ENCODE measurements at regions of chr6 and their contacts with region 1.

Region 1: GRCh38 chr6:125769147-125769783 is 19.8 kb downstream of the HEY2 start:
- DNase-seq: no peak
- H3K4me3 Mint-ChIP-seq: no peak overlapping the region
- H3K27ac Mint-ChIP-seq: no peak overlapping the region
- H3K4me1 Mint-ChIP-seq: peaks cover 10% of the 10 kb centered on the region
- H3K27me3 Mint-ChIP-seq: peaks cover 3% of the 10 kb centered on the region

Region 2: DNA sequence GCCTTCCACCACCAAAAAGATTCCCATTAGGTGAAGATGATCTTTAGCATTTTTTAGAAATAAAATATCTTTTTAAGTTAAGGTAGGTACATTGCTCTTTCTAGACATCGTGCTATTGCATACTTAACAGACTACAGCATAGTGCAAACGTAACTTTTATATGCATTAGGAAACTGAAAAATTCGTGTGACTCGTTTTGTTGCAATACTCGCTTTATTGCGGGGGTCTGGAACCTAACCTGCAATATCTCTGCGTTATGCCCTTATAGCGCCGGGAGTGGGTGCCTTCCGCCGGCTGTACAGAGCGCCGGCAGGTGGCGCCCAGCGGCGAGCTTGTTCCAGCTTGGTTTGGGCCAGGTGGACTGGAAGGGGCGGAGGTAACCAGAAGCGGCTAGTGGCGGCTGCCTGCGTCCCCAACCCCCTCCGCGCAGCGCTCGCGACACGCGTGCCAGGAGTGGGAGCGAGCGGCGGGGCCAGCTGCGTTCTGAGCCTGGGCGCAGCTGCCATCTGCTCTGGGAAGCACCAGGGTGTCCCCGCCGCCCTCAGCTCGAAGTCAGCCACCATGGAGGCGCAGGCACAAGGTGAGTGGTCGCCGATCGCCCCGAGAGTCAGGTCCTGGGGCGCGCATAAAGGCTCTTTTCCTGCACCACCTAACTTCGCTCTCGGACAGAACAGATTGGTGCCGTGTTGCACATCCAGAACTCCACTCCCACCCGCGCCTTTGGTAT is 615.7 kb before region 1 on chr6 and contains the start of gene TPD52L1:
- CTCF ChIA-PET with region 1: no interaction called
- intact Hi-C with region 1: loop called (anchors 1 kb)
- DNase-seq: peak; percentile 73
- H3K4me3 Mint-ChIP-seq: peak within 1 kb of the TSS; percentile 74
- H3K27ac Mint-ChIP-seq: no peak within 1 kb of the TSS
- H3K4me1 Mint-ChIP-seq: peaks cover 6% of the 10 kb centered on the region
- H3K27me3 Mint-ChIP-seq: peaks cover 28% of the 10 kb centered on the region
- total RNA-seq, gene TPD52L1: 5.6 to 5.7 TPM

Region 3: GRCh38 chr6:125512621-125513020 is 256.6 kb before region 1 on chr6:
- CTCF ChIA-PET with region 1: no interaction called
- intact Hi-C with region 1: loop called (anchors 1 kb)
- DNase-seq: no peak
- H3K4me3 Mint-ChIP-seq: no peak overlapping the region
- H3K27ac Mint-ChIP-seq: no peak overlapping the region
- H3K4me1 Mint-ChIP-seq: no peaks in the 10 kb centered on the region
- H3K27me3 Mint-ChIP-seq: peaks cover 2% of the 10 kb centered on the region

Measured in activated naive CD4-positive, alpha-beta T cell treated with anti-CD3 and anti-CD28 coated beads for 36 hours (primary cell).